Activated B cell treated with CpG ODN at 0.5 μM for 24 hours (primary cell): ENCODE measurements at regions of chr21 and their contacts with region 1.

Region 1: GRCh38 chr21:33434770-33435360 is 31.7 kb downstream of the IFNGR2 start:
- DNase-seq: no peak
- ATAC-seq: peak; percentile 90
- H3K4me3 Mint-ChIP-seq: peak overlapping the region; percentile 55
- H3K27ac Mint-ChIP-seq: peak overlapping the region; percentile 88
- H3K4me1 Mint-ChIP-seq: peaks cover 64% of the 10 kb centered on the region
- H3K27me3 Mint-ChIP-seq: no peaks in the 10 kb centered on the region
- CTCF ChIP-seq: no peak

Region 2: GRCh38 chr21:33374450-33375096 is 60.3 kb before region 1 on chr21:
- CTCF ChIA-PET with region 1: no interaction called
- POLR2A ChIA-PET with region 1: interaction called, 6 read pairs
- intact Hi-C with region 1: loop called (anchors 1 kb)
- DNase-seq: no peak
- ATAC-seq: peak; percentile 72
- H3K4me3 Mint-ChIP-seq: peak overlapping the region; percentile 59
- H3K27ac Mint-ChIP-seq: peak overlapping the region; percentile 87
- H3K4me1 Mint-ChIP-seq: peaks cover 79% of the 10 kb centered on the region
- H3K27me3 Mint-ChIP-seq: no peaks in the 10 kb centered on the region
- CTCF ChIP-seq: no peak

Region 3: GRCh38 chr21:33380483-33380998 is 54.3 kb before region 1 on chr21:
- CTCF ChIA-PET with region 1: no interaction called
- POLR2A ChIA-PET with region 1: interaction called, 15 read pairs
- intact Hi-C with region 1: loop called (anchors 1 kb)
- DNase-seq: peak; percentile 59
- ATAC-seq: peak; percentile 63
- H3K4me3 Mint-ChIP-seq: peak overlapping the region; percentile 59
- H3K27ac Mint-ChIP-seq: peak overlapping the region; percentile 97
- H3K4me1 Mint-ChIP-seq: peaks cover 84% of the 10 kb centered on the region
- H3K27me3 Mint-ChIP-seq: no peaks in the 10 kb centered on the region
- CTCF ChIP-seq: no peak